MCF 10A (cell line): ENCODE measurements at regions of chr12 and their contacts with region 1.

Region 1: DNA sequence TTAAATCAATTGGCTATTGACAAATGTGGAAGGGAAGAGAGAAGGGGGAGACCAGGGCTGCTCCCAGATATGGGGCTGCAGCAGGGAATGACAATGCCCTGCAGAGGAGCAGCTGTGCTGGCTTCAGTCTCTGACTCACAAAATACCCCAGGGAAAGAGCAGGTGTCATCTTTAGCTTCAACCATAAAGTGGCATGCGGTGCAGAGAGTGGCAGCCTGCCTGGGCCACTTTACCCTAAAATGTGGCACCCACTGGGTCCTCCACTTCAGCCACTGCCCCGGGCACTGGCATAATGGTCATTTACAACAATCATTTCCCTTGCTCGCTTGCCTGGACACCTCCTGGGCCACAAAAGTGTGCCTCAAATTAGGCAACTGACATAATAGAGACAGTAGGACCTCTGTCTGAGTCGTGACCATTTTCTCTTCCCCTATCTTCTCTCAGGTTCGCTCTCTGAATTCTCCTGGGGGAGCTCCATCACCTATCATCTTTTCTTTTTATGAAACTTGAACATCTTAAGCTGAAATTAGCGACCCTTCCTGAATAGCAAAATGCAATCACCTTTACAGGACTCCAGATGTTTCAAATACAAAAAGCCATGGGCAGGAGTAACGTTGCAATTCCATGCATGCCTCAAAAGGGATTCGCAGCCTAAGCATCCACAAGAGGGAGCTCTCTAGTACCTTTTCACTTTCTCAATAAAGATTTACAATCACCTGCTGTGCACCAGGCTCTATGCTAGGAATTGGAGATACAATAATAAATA is 179.9 kb upstream of the ATF7IP start:
- DNase-seq: peak; percentile 61
- H3K4me3 Mint-ChIP-seq: no peak overlapping the region
- H3K27ac Mint-ChIP-seq: no peak overlapping the region
- H3K4me1 Mint-ChIP-seq: no peaks in the 10 kb centered on the region
- H3K27me3 Mint-ChIP-seq: peaks cover 20% of the 10 kb centered on the region
- CTCF ChIP-seq: peak; percentile 76

Region 2: DNA sequence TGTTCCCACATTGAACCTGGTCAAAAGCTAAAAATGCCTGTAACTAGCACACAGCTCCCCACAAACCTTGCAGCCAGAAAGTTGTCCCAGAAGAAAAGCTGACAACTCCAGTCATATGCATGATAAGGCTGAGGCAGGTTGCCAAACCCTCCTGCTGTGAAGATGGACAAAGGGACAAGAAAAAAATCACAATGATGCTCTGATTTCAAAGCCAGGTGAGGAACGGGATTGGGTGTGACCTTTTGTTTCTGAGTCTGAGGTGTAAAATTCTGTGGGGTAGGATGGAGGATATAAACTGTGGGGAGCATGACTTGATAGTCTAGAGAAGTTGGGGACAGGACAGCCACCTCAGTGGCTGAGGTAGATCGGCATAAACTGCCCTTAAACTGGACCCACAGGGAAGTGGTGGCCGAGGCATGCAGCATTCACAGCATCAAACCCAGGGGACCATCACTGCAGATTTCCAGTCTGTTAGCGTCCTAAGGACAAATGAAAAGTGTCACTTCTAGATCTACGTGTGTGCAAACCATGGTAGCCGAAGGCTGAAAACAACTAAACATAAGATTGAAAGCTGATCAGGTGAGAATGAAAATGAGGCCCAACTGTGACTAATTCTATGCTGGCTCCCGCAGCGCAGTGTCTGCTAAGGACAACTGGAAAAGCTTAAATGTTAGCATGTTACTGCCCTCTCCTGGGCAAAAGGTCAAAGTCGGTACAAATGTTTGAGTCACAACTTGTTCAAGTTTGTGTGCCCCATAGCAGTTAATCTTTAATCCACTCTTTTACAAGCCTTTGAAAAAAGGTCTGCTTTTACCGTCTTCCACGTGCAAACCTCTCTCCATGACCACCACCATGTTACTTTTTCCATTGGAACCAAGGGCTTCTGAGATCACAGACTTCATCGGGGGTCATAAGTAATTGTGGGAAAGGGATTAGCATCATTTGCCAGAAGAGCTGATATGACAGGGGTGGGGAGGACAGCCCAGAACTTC is 244.1 kb before region 1 on chr12:
- CTCF ChIA-PET with region 1: no interaction called
- POLR2A ChIA-PET with region 1: no interaction called
- intact Hi-C with region 1: no loop called
- DNase-seq: peak; percentile 80
- H3K4me3 Mint-ChIP-seq: no peak overlapping the region
- H3K27ac Mint-ChIP-seq: no peak overlapping the region
- H3K4me1 Mint-ChIP-seq: no peaks in the 10 kb centered on the region
- H3K27me3 Mint-ChIP-seq: no peaks in the 10 kb centered on the region
- CTCF ChIP-seq: peak; percentile 41

Region 3: DNA sequence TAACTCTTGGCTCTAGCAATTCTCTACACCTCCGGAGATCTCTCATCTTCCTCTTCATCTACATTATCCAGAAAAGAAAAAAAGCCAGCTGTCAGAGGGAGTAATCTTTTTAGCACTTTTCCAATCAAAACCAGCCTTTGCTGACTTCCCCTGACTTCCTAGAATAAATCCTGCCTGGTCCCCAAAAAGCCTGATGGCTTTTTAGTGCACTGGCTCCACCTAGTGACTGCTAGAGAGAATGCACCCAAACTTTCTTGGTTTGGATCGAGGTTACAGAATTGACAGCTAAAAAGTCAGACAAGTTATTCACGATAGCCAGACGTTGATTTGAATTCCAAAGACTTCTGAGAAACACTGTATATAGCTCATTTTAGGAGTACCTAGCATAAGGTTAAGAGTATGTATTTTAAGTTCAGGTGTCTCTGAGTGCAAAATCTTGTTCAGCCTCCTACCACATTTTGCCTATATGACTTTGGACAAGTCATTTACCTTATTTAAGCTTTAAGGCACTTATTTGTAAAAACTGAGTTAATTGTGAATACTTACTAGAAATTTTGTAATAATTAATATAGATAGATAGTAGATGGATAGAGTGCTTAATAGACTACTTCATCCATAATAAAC is 18.5 kb before region 1 on chr12:
- CTCF ChIA-PET with region 1: interaction called, 10 read pairs
- POLR2A ChIA-PET with region 1: no interaction called
- intact Hi-C with region 1: no loop called
- DNase-seq: peak; percentile 68
- H3K4me3 Mint-ChIP-seq: no peak overlapping the region
- H3K27ac Mint-ChIP-seq: no peak overlapping the region
- H3K4me1 Mint-ChIP-seq: no peaks in the 10 kb centered on the region
- H3K27me3 Mint-ChIP-seq: peaks cover 9% of the 10 kb centered on the region
- CTCF ChIP-seq: peak; percentile 95

Region 4: DNA sequence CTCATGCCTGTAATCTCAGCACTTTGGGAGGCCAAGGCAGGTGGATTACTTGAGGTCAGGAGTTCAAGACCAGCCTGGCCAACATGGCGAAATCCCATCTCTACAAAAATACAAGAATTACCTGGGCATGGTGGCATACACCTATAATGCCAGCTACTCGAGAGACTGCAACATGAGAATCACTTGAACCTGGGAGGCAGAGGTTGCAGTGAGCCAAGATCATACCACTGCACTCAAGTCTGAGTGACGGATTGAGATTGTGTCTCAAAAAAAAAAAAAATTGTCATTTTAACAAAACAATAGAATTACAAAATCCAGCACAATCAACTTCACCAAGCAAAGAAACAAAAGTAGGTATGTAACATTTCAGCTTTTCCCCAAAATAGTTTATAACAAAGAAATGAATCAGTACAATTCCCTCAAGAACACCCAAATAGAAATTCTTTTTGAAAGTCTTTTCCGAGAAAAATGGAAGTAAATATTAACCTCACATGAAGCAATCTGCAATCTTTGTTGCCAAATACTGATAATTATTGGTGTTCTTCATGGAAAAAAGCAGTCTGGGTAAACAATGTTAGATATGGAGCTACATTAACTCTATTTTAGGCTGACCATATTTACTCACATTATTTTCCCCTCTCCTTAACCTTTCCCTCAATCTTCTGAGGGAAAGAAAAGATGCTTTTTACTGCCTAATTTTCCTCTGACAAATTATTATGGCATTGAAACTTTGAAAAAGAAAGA is 14.0 kb after region 1 on chr12:
- CTCF ChIA-PET with region 1: interaction called, 26 read pairs
- POLR2A ChIA-PET with region 1: interaction called, 3 read pairs
- intact Hi-C with region 1: no loop called
- DNase-seq: no peak
- H3K4me3 Mint-ChIP-seq: no peak overlapping the region
- H3K27ac Mint-ChIP-seq: no peak overlapping the region
- H3K4me1 Mint-ChIP-seq: no peaks in the 10 kb centered on the region
- H3K27me3 Mint-ChIP-seq: no peaks in the 10 kb centered on the region
- CTCF ChIP-seq: no peak

Region 5: GRCh38 chr12:14219156-14219555 is 33.5 kb after region 1 on chr12:
- CTCF ChIA-PET with region 1: interaction called, 15 read pairs
- POLR2A ChIA-PET with region 1: no interaction called
- intact Hi-C with region 1: no loop called
- DNase-seq: no peak
- H3K4me3 Mint-ChIP-seq: no peak overlapping the region
- H3K27ac Mint-ChIP-seq: no peak overlapping the region
- H3K4me1 Mint-ChIP-seq: no peaks in the 10 kb centered on the region
- H3K27me3 Mint-ChIP-seq: no peaks in the 10 kb centered on the region
- CTCF ChIP-seq: no peak

Region 6: DNA sequence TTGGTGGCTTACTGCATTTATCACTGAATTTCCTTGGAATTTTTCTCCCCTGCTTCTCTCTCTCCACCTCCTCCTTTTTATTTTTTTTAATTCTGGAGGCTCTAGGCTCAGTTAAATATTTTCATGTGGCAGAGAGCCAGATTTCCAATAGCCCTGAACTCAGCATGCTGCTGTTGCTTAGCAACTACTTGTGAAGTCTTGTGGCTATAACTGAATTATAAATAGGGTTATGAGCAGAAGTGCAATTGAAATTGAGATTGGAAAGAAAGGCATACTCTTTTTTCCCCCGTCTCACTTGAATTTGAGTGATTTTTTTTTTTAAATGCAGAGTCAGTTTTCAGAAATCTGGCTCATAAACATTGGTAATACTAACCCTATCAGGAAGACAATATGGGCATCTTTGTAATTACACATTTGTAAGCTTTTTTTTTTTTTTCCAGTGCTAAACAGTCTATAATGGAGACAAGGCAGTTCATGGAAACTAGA is 218.1 kb after region 1 on chr12:
- CTCF ChIA-PET with region 1: interaction called, 10 read pairs
- POLR2A ChIA-PET with region 1: no interaction called
- intact Hi-C with region 1: no loop called
- DNase-seq: peak; percentile 69
- H3K4me3 Mint-ChIP-seq: peak overlapping the region; percentile 28
- H3K27ac Mint-ChIP-seq: peak overlapping the region; percentile 91
- H3K4me1 Mint-ChIP-seq: peaks cover 27% of the 10 kb centered on the region
- H3K27me3 Mint-ChIP-seq: no peaks in the 10 kb centered on the region
- CTCF ChIP-seq: no peak

Region 7: DNA sequence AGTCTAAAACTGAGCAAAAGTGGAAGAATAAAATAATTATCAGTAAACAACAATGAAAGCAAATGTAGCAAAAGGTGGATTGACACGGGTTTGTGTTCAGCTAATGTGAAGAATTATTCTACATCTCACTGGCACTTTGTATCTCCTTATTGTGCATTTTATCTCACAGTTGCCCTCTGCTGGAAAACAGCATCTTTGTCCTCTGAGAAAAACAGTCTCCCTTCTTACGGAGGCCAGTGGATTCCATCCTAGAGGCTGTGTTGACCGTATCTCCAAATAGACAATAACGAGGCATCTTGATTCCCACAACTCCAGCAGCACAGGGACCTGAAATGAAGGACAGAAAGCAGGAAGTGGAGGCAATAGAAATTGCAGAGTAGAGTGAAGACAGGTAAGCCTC is 433.4 kb after region 1 on chr12:
- CTCF ChIA-PET with region 1: interaction called, 10 read pairs
- POLR2A ChIA-PET with region 1: no interaction called
- intact Hi-C with region 1: no loop called
- DNase-seq: peak; percentile 48
- H3K4me3 Mint-ChIP-seq: no peak overlapping the region
- H3K27ac Mint-ChIP-seq: no peak overlapping the region
- H3K4me1 Mint-ChIP-seq: peaks cover 8% of the 10 kb centered on the region
- H3K27me3 Mint-ChIP-seq: no peaks in the 10 kb centered on the region
- CTCF ChIP-seq: peak; percentile 33

Region 8: DNA sequence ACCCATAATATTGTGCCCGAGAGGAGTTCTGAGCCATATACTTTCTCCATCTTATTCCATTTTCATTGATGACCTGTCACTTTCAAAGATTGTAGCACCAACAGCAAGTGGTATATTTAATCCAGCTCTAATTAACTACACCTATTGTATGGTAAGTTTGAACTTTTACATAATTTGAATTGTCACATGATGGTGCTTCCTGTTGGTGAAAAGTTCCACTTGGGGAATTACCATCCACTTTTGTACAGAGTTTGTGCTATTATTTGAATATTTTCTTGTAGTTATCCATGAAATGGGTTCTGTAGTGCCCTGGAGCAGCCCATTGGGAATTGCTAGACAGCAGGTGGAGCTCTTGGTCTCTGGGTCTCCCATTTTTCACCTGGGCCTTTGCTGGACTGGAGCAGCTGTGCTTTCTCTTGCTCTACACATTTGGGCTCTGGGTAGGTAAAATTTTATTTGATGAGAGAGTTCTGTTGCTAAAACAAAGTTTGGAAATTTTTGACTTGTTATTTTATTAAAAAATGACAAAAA is 625.4 kb after region 1 on chr12:
- CTCF ChIA-PET with region 1: interaction called, 11 read pairs
- POLR2A ChIA-PET with region 1: no interaction called
- intact Hi-C with region 1: no loop called
- DNase-seq: peak; percentile 64
- H3K4me3 Mint-ChIP-seq: no peak overlapping the region
- H3K27ac Mint-ChIP-seq: no peak overlapping the region
- H3K4me1 Mint-ChIP-seq: peaks cover 6% of the 10 kb centered on the region
- H3K27me3 Mint-ChIP-seq: no peaks in the 10 kb centered on the region
- CTCF ChIP-seq: peak; percentile 65